MCF 10A (cell line): ENCODE measurements at regions of chr10 and their contacts with region 1.

Region 1: DNA sequence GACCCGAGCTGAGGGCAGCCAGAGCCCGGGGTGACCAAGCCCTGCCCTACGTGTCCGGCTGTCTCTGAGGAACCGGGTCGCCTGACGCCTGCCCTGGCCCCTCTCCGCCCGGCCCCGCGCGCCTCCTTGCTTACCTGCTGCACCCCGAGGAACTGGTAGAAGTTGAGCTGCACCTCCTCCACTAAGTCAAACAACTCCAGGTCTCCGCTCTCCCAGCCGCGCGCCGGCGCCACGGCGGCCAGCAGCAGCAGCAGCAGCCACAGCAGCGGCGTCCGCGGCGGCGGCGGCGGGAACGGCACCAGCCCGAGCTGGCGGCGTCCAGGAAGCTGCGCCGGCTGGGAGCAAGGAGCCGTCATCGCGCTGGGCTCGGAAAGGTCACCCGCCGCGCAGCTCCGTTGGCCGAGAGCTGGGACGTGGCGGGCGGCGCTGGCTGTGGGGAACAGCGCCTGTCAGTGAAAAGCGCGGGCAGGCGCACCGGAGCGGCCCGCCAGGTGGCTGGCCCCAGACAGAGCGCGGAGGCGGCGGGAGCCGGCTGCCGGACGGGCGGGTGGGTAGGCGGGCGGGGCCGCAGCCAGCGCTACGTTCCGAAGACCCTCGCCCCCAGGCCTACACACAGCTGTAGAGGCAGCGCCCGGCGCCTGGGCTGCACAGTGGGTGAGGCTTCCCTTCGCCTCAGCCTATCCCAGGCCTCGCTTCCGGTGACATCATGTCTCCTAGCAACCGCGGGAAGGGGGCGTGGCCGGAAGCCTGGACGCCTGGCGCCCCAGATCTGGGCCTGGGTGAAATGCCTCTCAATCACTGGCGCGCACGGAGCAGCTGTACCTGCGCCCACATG is at the start of gene DNAJC1:
- DNase-seq: peak; percentile 97
- H3K4me3 Mint-ChIP-seq: peak within 1 kb of the TSS; percentile 79
- H3K27ac Mint-ChIP-seq: peak within 1 kb of the TSS; percentile 79
- H3K4me1 Mint-ChIP-seq: peaks cover 13% of the 10 kb centered on the region
- H3K27me3 Mint-ChIP-seq: no peaks in the 10 kb centered on the region
- CTCF ChIP-seq: no peak
- total RNA-seq, gene DNAJC1: 57.8 and 69.5 TPM in 2 replicates

Region 2: DNA sequence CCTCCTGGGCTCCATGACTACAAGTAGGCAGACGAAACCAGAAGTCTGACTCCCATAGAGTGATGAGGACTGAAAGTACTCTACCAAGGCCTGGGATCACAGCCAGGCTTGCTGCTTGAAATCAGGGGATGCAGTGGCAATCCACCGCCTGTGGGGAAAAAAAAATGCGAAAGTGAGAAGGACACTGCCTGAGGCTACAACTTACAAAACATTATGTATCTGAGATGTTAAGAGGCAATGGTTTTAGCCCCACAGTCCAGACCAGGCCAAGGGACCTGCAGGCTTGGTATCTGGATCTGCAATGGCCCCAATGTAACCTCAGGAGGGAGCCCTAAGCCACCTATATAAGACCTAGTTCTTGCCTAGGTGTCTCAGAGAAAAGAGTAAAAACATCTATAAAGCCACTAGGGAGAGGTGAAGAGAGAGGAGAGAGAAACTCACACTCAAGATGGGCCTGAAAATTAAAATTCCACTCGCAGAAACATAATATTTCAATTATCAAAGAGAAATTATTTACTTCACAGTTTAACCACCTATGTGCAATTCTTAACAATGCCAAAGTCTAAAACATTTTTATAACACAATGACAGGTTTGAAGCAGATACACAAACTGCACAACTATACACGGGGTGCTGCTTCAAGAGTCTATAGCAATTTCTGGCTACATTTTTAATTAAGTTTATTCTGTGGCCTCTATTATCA is 13.7 kb before region 1 on chr10:
- CTCF ChIA-PET with region 1: interaction called, 13 read pairs
- POLR2A ChIA-PET with region 1: interaction called, 49 read pairs
- intact Hi-C with region 1: no loop called
- DNase-seq: peak; percentile 74
- H3K4me3 Mint-ChIP-seq: peak overlapping the region; percentile 5
- H3K27ac Mint-ChIP-seq: peak overlapping the region; percentile 63
- H3K4me1 Mint-ChIP-seq: peaks cover 19% of the 10 kb centered on the region
- H3K27me3 Mint-ChIP-seq: no peaks in the 10 kb centered on the region
- CTCF ChIP-seq: peak; percentile 42

Region 3: DNA sequence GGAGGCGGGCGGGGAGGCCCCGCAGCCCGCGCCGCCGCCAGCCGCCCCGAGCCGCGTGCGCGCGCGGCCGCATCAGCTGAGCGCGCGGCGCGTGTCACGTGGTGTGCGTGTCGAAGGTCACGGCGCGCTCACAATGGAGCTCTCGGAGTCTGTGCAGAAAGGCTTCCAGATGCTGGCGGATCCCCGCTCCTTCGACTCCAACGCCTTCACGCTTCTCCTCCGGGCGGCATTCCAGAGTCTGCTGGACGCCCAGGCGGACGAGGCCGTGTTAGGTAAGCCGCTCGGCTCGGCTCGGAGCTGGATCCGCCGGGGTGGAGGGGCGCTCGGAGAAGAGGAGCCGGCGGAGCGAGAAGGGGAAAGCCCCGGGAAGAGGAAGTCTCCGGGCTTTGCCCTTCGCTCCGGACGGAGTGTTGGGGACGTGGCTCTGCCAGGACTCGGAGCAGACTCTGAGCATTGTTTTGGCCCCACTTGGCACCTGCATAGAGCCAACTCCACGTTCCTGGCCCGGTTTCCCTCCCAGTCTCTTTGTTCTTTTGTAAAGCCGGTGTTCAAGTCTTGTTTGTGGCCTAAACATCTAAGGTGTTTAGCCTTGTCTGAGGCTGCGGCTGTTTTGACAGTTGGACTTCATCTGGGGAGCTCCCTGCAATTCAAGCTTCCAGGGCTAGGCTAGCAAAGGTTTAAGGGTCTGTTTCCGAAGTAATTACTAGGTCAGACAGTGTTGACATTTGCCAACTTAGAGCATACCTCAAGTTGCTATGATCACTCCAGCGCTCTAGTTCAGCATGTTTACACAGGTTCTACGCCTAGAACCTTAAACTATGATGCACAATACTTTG is 313.2 kb after region 1 on chr10 and contains the start of gene COMMD3:
- CTCF ChIA-PET with region 1: interaction called, 10 read pairs
- POLR2A ChIA-PET with region 1: interaction called, 89 read pairs
- intact Hi-C with region 1: loop called (anchors 2 kb)
- DNase-seq: peak; percentile 86
- H3K4me3 Mint-ChIP-seq: peak within 1 kb of the TSS; percentile 85
- H3K27ac Mint-ChIP-seq: peak within 1 kb of the TSS; percentile 84
- H3K4me1 Mint-ChIP-seq: peaks cover 16% of the 10 kb centered on the region
- H3K27me3 Mint-ChIP-seq: no peaks in the 10 kb centered on the region
- CTCF ChIP-seq: no peak
- total RNA-seq, gene COMMD3: 69.4 and 73.4 TPM in 2 replicates

Region 4: DNA sequence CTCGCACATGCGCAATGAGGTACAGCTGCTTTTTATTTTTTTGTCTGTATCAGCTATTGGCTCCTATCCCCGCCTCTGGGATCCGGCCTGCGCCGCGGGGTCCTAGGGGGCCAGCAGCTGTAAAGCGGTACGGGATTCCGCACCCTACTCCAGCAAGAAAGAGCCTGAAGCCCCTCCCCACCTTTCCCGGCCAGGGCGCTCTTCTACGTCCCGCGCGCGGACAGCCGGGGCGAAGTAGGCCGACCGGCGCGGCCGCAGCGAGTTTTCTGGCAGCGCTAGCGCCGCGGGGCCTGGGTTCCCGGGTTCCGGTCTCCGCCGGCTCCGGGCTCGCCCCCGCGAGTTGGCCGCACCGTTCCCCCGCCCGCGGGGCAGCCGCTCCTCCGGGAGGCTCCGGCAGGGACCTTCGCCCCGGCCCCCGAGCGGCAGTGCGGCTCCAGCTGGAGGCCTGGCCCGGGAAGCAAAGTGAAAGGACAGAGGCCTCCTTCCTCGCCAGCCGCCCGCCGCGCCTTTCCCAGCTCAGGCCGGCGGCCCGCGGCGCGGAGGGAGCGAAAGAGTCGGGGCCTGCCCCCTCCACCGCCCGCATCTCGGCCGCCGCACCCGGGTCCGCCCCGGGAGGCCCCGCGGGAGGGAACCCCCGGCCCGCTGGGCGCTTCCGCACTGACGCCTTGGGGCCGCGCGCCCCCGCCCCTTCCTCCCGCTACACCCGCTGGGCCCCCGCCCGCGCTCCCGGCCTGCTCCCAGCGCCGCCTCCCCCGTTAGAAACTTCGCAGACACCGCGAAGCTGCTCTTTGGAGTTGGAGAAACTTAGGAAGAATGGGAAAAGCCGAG is 337.3 kb after region 1 on chr10:
- CTCF ChIA-PET with region 1: interaction called, 7 read pairs
- POLR2A ChIA-PET with region 1: interaction called, 16 read pairs
- intact Hi-C with region 1: no loop called
- DNase-seq: peak; percentile 79
- H3K4me3 Mint-ChIP-seq: peak overlapping the region; percentile 75
- H3K27ac Mint-ChIP-seq: peak overlapping the region; percentile 85
- H3K4me1 Mint-ChIP-seq: peaks cover 9% of the 10 kb centered on the region
- H3K27me3 Mint-ChIP-seq: peaks cover 15% of the 10 kb centered on the region
- CTCF ChIP-seq: no peak

Region 5: DNA sequence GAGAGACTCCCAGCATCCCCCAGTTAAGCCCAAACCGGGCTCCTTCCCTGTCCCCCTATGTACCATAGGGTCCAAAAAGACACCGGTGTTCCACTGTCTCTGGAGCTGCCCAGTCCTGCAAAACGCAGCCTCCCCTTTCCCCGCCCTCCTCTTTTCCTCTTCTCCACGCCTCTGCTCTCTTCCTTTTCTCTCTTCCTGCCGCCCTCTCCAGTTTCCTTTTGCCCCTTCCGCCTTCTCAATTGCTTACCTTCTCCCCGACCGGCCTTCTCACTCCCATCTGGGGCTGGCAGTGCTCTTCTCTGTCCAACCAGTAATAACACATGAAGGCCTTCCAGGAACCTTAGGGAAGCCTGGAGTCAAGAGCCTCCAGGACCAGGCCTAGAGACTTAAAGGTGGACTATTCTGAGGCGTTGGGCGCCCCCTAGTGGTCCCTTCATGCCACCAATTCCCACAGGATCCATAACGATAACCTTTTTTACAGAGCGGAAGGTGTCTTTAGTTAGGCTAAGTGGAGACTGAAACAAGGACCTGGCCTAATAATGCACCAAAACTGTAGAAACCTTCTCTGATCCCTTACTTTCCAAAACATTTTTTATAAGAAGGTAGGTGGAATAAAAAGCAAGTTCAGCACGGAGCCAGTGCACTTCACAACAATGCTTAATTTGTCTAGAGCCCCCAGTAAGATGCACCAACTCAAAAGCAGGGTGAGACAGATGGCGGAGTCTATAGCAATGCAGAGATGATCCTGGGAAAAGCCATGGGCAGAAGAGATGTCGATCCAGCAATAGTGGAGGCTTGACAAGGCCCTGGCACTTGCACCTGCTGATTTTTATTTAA is 1064.9 kb after region 1 on chr10:
- CTCF ChIA-PET with region 1: no interaction called
- POLR2A ChIA-PET with region 1: no interaction called
- intact Hi-C with region 1: loop called (anchors 5 kb)
- DNase-seq: peak; percentile 82
- H3K4me3 Mint-ChIP-seq: no peak overlapping the region
- H3K27ac Mint-ChIP-seq: no peak overlapping the region
- H3K4me1 Mint-ChIP-seq: peaks cover 12% of the 10 kb centered on the region
- H3K27me3 Mint-ChIP-seq: no peaks in the 10 kb centered on the region
- CTCF ChIP-seq: peak; percentile 58